Thyroid gland (tissue), 4 donors: ENCODE measurements at regions of chr14 and their contacts with region 1.

Region 1: GRCh38 chr14:61726778-61727658 is 31.7 kb downstream of the HIF1A start:
- DNase-seq: no peak
- H3K4me3 ChIP-seq: no peak overlapping the region
- H3K27ac ChIP-seq: no peak overlapping the region
- H3K4me1 ChIP-seq: no peaks in the 10 kb centered on the region
- H3K27me3 ChIP-seq: no peaks in the 10 kb centered on the region
- CTCF ChIP-seq: no peak
- POLR2A ChIP-seq: no peak

Region 2: GRCh38 chr14:61466249-61466904 is 260.6 kb before region 1 on chr14:
- intact Hi-C with region 1: loop called (anchors 5 kb)
- DNase-seq: no peak
- H3K4me3 ChIP-seq: no peak overlapping the region
- H3K27ac ChIP-seq: no peak overlapping the region
- H3K4me1 ChIP-seq: peaks cover 10 to 47% of the 10 kb centered on the region in 2 donors
- H3K27me3 ChIP-seq: no peaks in the 10 kb centered on the region
- CTCF ChIP-seq: no peak
- POLR2A ChIP-seq: no peak

Region 3: GRCh38 chr14:61553725-61554641 is 173.0 kb before region 1 on chr14:
- intact Hi-C with region 1: no loop called
- DNase-seq: no peak
- H3K4me3 ChIP-seq: no peak overlapping the region
- H3K27ac ChIP-seq: peak overlapping the region in 1 of 3 donors; percentile 52
- H3K4me1 ChIP-seq: peaks cover 9 to 38% of the 10 kb centered on the region in 2 donors
- H3K27me3 ChIP-seq: no peaks in the 10 kb centered on the region
- CTCF ChIP-seq: no peak
- POLR2A ChIP-seq: no peak

Region 4: GRCh38 chr14:61644834-61645233 is 82.2 kb before region 1 on chr14:
- intact Hi-C with region 1: no loop called
- DNase-seq: no peak
- H3K4me3 ChIP-seq: no peak overlapping the region
- H3K27ac ChIP-seq: no peak overlapping the region
- H3K4me1 ChIP-seq: no peaks in the 10 kb centered on the region
- H3K27me3 ChIP-seq: no peaks in the 10 kb centered on the region
- CTCF ChIP-seq: no peak
- POLR2A ChIP-seq: no peak